Calu3 (cell line): ENCODE measurements at regions of chr15 and their contacts with region 1.

Region 1: DNA sequence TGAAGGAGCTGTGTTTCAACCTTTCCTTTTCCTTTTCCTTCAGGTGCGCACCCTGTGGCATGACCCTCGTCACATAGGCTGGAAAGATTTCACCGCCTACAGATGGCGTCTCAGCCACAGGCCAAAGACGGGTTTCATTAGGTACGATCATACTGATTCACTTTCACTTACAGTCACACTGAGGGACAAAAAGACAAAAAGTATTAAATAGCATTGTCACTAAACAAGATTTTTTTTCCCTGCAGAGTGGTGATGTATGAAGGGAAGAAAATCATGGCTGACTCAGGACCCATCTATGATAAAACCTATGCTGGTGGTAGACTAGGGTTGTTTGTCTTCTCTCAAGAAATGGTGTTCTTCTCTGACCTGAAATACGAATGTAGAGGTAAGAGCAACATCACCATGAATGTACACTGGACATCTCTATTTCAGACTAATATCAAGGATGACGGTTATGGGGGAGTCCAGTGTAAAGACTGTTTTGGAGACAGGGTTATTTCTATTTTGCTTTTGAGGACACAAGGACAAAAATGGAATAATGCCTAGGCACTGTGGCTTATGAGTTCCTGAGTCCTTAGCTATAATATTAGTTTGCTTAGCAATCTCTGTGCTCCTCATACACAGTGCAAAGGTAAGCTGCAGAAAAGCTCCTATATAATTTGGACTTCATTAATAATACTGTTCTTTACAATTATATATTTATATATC is 13.3 kb downstream of the THBS1 start:
- DNase-seq: no peak
- H3K4me3 Mint-ChIP-seq: no peak overlapping the region
- H3K27ac Mint-ChIP-seq: no peak overlapping the region
- H3K4me1 Mint-ChIP-seq: no peaks in the 10 kb centered on the region
- H3K27me3 Mint-ChIP-seq: no peaks in the 10 kb centered on the region
- CTCF ChIP-seq: no peak

Region 2: GRCh38 chr15:39543651-39544050 is 50.6 kb before region 1 on chr15:
- CTCF ChIA-PET with region 1: no interaction called
- intact Hi-C with region 1: no loop called
- DNase-seq: no peak
- H3K4me3 Mint-ChIP-seq: no peak overlapping the region
- H3K27ac Mint-ChIP-seq: no peak overlapping the region
- H3K4me1 Mint-ChIP-seq: no peaks in the 10 kb centered on the region
- H3K27me3 Mint-ChIP-seq: no peaks in the 10 kb centered on the region
- CTCF ChIP-seq: no peak

Region 3: GRCh38 chr15:39666677-39667076 is 72.5 kb after region 1 on chr15:
- CTCF ChIA-PET with region 1: no interaction called
- intact Hi-C with region 1: loop called (anchors 10 kb)
- DNase-seq: no peak
- H3K4me3 Mint-ChIP-seq: no peak overlapping the region
- H3K27ac Mint-ChIP-seq: no peak overlapping the region
- H3K4me1 Mint-ChIP-seq: no peaks in the 10 kb centered on the region
- H3K27me3 Mint-ChIP-seq: no peaks in the 10 kb centered on the region
- CTCF ChIP-seq: no peak